CD4-positive, alpha-beta T cell (primary cell): ENCODE measurements at regions of chr5 and their contacts with region 1.

Region 1: DNA sequence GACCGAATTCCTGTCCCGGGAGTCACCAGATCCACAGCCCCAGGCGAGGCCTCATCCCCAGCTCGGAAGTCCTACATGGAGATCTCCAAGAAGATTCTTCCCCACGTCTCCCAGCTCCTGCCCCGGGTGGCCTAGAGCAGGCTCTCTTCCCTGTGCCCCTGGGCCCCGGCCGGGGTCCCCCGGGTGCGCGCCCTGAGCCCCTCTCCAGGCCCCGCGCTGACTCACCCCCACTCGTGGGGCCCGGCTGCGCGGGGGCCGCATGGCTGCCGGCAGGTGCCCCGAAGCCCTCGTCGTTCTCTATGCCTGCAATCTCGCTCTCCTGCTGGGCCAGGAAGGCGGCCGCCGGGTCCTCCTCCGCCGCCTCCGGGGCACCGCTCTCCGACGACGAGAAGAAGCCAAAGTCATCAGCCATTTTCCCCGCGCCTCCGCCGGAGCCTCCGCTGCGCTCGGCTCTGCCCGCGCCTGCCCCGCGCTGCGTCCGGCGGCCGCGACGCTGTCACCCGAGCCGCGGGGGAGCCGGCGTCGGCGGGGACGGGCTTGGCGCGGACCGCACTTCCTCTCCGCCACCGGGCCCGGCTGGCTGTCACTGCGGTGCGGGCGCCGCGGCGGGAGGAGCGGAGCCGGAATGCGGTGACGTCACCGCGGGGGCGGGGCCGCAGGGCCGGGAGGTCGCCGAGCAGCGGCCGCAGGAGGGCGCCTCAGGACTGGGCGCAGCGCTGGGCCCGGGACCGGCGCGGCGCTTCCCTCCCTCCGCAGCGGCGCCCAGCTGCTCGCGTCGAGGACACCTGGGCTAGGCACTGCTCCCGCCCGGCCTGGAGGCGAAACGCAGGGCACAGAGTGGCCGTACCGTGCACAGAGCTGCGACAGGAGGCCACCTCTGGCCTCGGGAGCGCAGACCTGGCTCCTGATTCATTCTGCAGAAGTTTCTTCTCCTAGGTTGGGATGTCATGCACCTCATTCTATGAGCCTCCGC is at the start of gene CLTB:
- DNase-seq: peak; percentile 79 to 98 (median 92)
- ATAC-seq: peak; percentile 90
- H3K4me3 ChIP-seq: peak within 1 kb of the TSS; percentile 65
- H3K4me3 Mint-ChIP-seq: peak within 1 kb of the TSS; percentile 89
- H3K27ac ChIP-seq: peak within 1 kb of the TSS; percentile 18 to 61
- H3K27ac Mint-ChIP-seq: peak within 1 kb of the TSS; percentile 86
- H3K4me1 ChIP-seq: peaks cover 37% of the 10 kb centered on the region
- H3K4me1 Mint-ChIP-seq: peaks cover 42% of the 10 kb centered on the region
- H3K27me3 ChIP-seq: no peaks in the 10 kb centered on the region
- H3K27me3 Mint-ChIP-seq: no peaks in the 10 kb centered on the region
- CTCF ChIP-seq: peak; percentile 41
- total RNA-seq, gene CLTB: 69.5 to 73.2 TPM

Region 2: GRCh38 chr5:176183321-176184074 is 232.7 kb before region 1 on chr5:
- CTCF ChIA-PET with region 1: no interaction called
- POLR2A ChIA-PET with region 1: no interaction called
- intact Hi-C with region 1: no loop called
- DNase-seq: no peak
- ATAC-seq: no peak
- H3K4me3 ChIP-seq: no peak overlapping the region
- H3K4me3 Mint-ChIP-seq: no peak overlapping the region
- H3K27ac ChIP-seq: no peak overlapping the region
- H3K27ac Mint-ChIP-seq: no peak overlapping the region
- H3K4me1 ChIP-seq: no peaks in the 10 kb centered on the region
- H3K4me1 Mint-ChIP-seq: no peaks in the 10 kb centered on the region
- H3K27me3 ChIP-seq: peaks cover 0 to 5% of the 10 kb centered on the region in 2 experiments
- H3K27me3 Mint-ChIP-seq: peaks cover 43% of the 10 kb centered on the region
- CTCF ChIP-seq: no peak

Region 3: GRCh38 chr5:176361437-176362232 is 54.6 kb before region 1 on chr5 and contains the start of gene KIAA1191:
- CTCF ChIA-PET with region 1: interaction called, 7 read pairs
- POLR2A ChIA-PET with region 1: interaction called, 12 read pairs
- intact Hi-C with region 1: loop called in 1 of 2 experiments (anchors 2 kb)
- DNase-seq: peak; percentile 89 to 98 (median 94)
- ATAC-seq: peak; percentile 92
- H3K4me3 ChIP-seq: peak within 1 kb of the TSS; percentile 98
- H3K4me3 Mint-ChIP-seq: peak within 1 kb of the TSS; percentile 96
- H3K27ac ChIP-seq: peak within 1 kb of the TSS; percentile 69 to 79
- H3K27ac Mint-ChIP-seq: peak within 1 kb of the TSS; percentile 87
- H3K4me1 ChIP-seq: peaks cover 41% of the 10 kb centered on the region
- H3K4me1 Mint-ChIP-seq: peaks cover 48% of the 10 kb centered on the region
- H3K27me3 ChIP-seq: no peaks in the 10 kb centered on the region
- H3K27me3 Mint-ChIP-seq: no peaks in the 10 kb centered on the region
- CTCF ChIP-seq: no peak
- total RNA-seq, gene KIAA1191: 64.8 TPM

Region 4: GRCh38 chr5:176447982-176448608 is 31.9 kb after region 1 on chr5 and contains the start of gene FAF2:
- CTCF ChIA-PET with region 1: interaction called, 29 read pairs
- POLR2A ChIA-PET with region 1: interaction called, 21 read pairs
- intact Hi-C with region 1: loop called in 1 of 2 experiments (anchors 1 kb)
- DNase-seq: peak; percentile 94 to 100 (median 98)
- ATAC-seq: peak; percentile 96
- H3K4me3 ChIP-seq: peak within 1 kb of the TSS; percentile 96
- H3K4me3 Mint-ChIP-seq: peak within 1 kb of the TSS; percentile 99
- H3K27ac ChIP-seq: peak within 1 kb of the TSS; percentile 81 to 96
- H3K27ac Mint-ChIP-seq: peak within 1 kb of the TSS; percentile 99
- H3K4me1 ChIP-seq: peaks cover 30% of the 10 kb centered on the region
- H3K4me1 Mint-ChIP-seq: peaks cover 49% of the 10 kb centered on the region
- H3K27me3 ChIP-seq: no peaks in the 10 kb centered on the region
- H3K27me3 Mint-ChIP-seq: no peaks in the 10 kb centered on the region
- CTCF ChIP-seq: peak; percentile 88
- total RNA-seq, gene FAF2: 27.5 to 30.1 TPM

Region 5: GRCh38 chr5:176559683-176560082 is 143.4 kb after region 1 on chr5:
- CTCF ChIA-PET with region 1: interaction called, 3 read pairs
- POLR2A ChIA-PET with region 1: no interaction called
- intact Hi-C with region 1: loop called in 1 of 2 experiments (anchors 1 kb)
- DNase-seq: peak in 7 of 14 experiments; percentile 17 to 71 (median 47)
- ATAC-seq: peak; percentile 84
- H3K4me3 ChIP-seq: no peak overlapping the region
- H3K4me3 Mint-ChIP-seq: no peak overlapping the region
- H3K27ac ChIP-seq: no peak overlapping the region
- H3K27ac Mint-ChIP-seq: peak overlapping the region; percentile 42
- H3K4me1 ChIP-seq: peaks cover 33% of the 10 kb centered on the region
- H3K4me1 Mint-ChIP-seq: peaks cover 41% of the 10 kb centered on the region
- H3K27me3 ChIP-seq: no peaks in the 10 kb centered on the region
- H3K27me3 Mint-ChIP-seq: no peaks in the 10 kb centered on the region
- CTCF ChIP-seq: no peak

Region 6: DNA sequence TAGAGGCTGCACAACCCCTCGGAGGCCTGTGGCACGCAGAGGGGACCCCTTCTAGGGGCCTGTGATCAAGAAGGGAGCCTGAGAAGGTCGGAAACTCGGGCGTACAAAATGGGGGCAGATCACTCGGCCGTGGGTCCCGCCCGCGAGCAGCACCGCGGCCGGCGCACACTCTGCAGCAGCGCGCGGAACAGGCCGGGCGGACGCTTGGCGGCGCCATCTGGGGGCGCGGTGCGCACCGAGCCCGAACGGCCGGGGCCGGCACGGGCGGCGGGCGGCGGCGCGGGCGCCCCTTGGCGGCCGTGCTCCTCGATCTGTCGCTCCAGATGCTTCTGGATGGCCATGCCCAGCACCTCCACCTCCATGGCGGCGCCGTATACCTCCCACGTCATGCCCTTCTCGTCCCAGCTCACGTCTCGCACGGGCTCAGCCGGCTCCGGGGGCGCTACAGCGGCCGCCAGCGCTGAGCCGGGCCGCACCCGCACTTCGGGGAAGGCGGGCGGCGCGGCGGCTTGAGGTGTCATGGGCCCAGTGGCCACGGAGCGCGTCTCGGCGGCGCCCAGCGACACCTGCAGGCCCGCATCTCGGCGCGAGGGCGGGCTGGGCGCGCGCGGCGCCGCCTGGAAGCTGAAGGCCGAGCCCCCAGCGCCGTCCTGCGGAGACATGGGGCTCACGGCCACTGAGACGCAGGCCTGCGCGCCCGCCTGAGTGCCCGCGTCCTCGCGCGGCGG is 180.6 kb after region 1 on chr5:
- CTCF ChIA-PET with region 1: interaction called, 11 read pairs
- POLR2A ChIA-PET with region 1: no interaction called
- intact Hi-C with region 1: loop called (anchors 1 kb)
- DNase-seq: peak; percentile 51 to 89 (median 67)
- ATAC-seq: peak; percentile 84
- H3K4me3 ChIP-seq: peak overlapping the region; percentile 33
- H3K4me3 Mint-ChIP-seq: peak overlapping the region; percentile 82
- H3K27ac ChIP-seq: no peak overlapping the region
- H3K27ac Mint-ChIP-seq: no peak overlapping the region
- H3K4me1 ChIP-seq: peaks cover 12% of the 10 kb centered on the region
- H3K4me1 Mint-ChIP-seq: peaks cover 8% of the 10 kb centered on the region
- H3K27me3 ChIP-seq: no peaks in the 10 kb centered on the region
- H3K27me3 Mint-ChIP-seq: no peaks in the 10 kb centered on the region
- CTCF ChIP-seq: peak; percentile 11